ENCODE measurements at regions of chr17 and their contacts with region 1.

Region 1: DNA sequence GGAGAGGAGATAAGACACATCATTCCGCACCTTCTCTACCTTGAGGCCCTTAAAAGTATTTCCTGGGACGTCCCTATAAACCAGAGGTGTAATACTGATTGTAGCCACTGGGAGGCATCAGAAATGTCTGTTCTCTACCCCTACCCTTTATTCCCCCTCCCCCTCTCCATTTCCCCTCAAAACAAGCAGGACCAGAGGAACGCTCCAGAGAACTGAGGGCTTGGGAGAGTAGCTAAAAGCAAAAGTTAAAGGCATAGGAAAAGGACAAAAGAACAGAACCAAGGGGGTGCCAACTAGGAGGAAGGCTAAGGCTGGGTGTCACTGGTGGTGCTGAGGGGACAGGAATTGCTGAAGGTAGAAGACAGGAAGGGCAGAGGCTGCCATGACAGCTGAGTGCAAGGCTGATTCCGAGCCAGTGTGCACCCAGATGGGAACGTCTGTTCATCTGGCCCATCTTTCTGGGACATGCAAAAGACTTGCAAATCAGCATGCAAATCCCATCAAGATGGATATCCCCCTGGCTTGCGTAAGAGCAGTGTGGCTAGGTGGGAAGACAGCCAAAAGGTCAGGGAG is 6.7 kb downstream of the CAMTA2 start:
- DNase-seq: peak in 1 of 10 donors; percentile 55

Region 2: GRCh38 chr17:5055543-5055942 is 74.8 kb after region 1 on chr17:
- intact Hi-C with region 1: loop called (anchors 5 kb)
- DNase-seq: peak in 2 of 10 donors; percentile 14 to 52

Measured in posterior cingulate gyrus (tissue), 11 donors.